ENCODE measurements at regions of chr3 and their contacts with region 1.

Region 1: GRCh38 chr3:160449636-160450598 is at the start of gene TRIM59:
- DNase-seq: peak; percentile 92
- ATAC-seq: peak; percentile 96
- H3K4me3 Mint-ChIP-seq: peak within 1 kb of the TSS; percentile 94
- H3K27ac Mint-ChIP-seq: peak within 1 kb of the TSS; percentile 90
- H3K4me1 Mint-ChIP-seq: peaks cover 33% of the 10 kb centered on the region
- H3K27me3 Mint-ChIP-seq: no peaks in the 10 kb centered on the region
- CTCF ChIP-seq: no peak
- total RNA-seq, gene TRIM59: 23.4 TPM in 2 replicates

Region 2: GRCh38 chr3:159763602-159764489 is 686.1 kb before region 1 on chr3:
- CTCF ChIA-PET with region 1: no interaction called
- POLR2A ChIA-PET with region 1: no interaction called
- intact Hi-C with region 1: loop called (anchors 5 kb)
- DNase-seq: peak; percentile 45
- ATAC-seq: peak; percentile 75
- H3K4me3 Mint-ChIP-seq: peak overlapping the region; percentile 90
- H3K27ac Mint-ChIP-seq: no peak overlapping the region
- H3K4me1 Mint-ChIP-seq: peaks cover 21% of the 10 kb centered on the region
- H3K27me3 Mint-ChIP-seq: peaks cover 32% of the 10 kb centered on the region
- CTCF ChIP-seq: no peak

Region 3: GRCh38 chr3:160012108-160012507 is 437.8 kb before region 1 on chr3:
- CTCF ChIA-PET with region 1: no interaction called
- POLR2A ChIA-PET with region 1: interaction called, 3 read pairs
- intact Hi-C with region 1: loop called (anchors 1 kb)
- DNase-seq: no peak
- ATAC-seq: peak; percentile 88
- H3K4me3 Mint-ChIP-seq: peak overlapping the region; percentile 25
- H3K27ac Mint-ChIP-seq: peak overlapping the region; percentile 83
- H3K4me1 Mint-ChIP-seq: peaks cover 42% of the 10 kb centered on the region
- H3K27me3 Mint-ChIP-seq: no peaks in the 10 kb centered on the region
- CTCF ChIP-seq: no peak

Region 4: DNA sequence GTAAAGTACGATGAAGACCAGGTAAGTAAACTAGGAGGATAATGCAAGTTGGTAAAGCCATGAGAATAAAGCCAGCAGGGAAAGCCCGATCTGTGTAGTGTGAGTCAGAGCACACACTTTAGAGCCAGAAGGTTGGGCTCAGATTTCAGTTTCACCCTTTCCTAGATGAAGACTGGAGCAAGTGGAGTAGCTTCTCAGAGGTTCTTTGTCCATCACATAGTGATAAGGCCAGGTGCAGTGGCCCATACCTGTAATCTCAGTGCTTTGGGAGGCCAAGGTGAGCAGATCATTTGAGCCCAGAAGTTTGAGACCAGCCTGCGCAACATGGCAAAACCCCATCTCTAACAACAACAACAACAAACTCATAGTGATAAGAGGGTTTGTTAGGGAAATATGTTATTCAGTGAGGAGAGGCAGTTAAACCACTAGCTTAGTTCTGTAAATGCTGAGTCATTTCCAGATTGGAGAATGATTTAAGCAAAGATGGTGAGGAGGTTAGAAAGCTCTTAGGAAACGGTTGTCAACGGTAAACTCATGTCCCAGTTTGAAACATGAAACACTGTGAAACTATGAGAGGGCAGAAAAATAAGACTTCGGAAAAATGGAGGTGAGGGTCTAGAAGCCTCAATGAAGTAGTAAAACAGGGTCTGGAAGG is 422.2 kb before region 1 on chr3:
- CTCF ChIA-PET with region 1: no interaction called
- POLR2A ChIA-PET with region 1: no interaction called
- intact Hi-C with region 1: no loop called
- DNase-seq: no peak
- ATAC-seq: no peak
- H3K4me3 Mint-ChIP-seq: no peak overlapping the region
- H3K27ac Mint-ChIP-seq: peak overlapping the region; percentile 36
- H3K4me1 Mint-ChIP-seq: no peaks in the 10 kb centered on the region
- H3K27me3 Mint-ChIP-seq: no peaks in the 10 kb centered on the region
- CTCF ChIP-seq: no peak

Region 5: GRCh38 chr3:160434071-160434470 is 15.8 kb before region 1 on chr3:
- CTCF ChIA-PET with region 1: no interaction called
- POLR2A ChIA-PET with region 1: no interaction called
- intact Hi-C with region 1: loop called (anchors 1 kb)
- DNase-seq: no peak
- ATAC-seq: no peak
- H3K4me3 Mint-ChIP-seq: no peak overlapping the region
- H3K27ac Mint-ChIP-seq: no peak overlapping the region
- H3K4me1 Mint-ChIP-seq: peaks cover 2% of the 10 kb centered on the region
- H3K27me3 Mint-ChIP-seq: no peaks in the 10 kb centered on the region
- CTCF ChIP-seq: no peak